Naive thymus-derived CD4-positive, alpha-beta T cell (primary cell): ENCODE measurements at regions of chr1 and their contacts with region 1.

Region 1: GRCh38 chr1:244451951-244452795 is 464 bp upstream of the ADSS2 start:
- DNase-seq: peak; percentile 93 to 99 (median 99)
- ATAC-seq: peak; percentile 94
- H3K4me3 ChIP-seq: peak overlapping the region; percentile 64
- H3K4me3 Mint-ChIP-seq: peak overlapping the region; percentile 76 to 99 (median 93)
- H3K27ac ChIP-seq: peak overlapping the region; percentile 96
- H3K27ac Mint-ChIP-seq: peak overlapping the region; percentile 85 to 99 (median 97)
- H3K4me1 ChIP-seq: peaks cover 27 to 36% of the 10 kb centered on the region in 2 donors
- H3K4me1 Mint-ChIP-seq: peaks cover 29 to 56% (median 41%) of the 10 kb centered on the region in 7 donors
- H3K27me3 ChIP-seq: no peaks in the 10 kb centered on the region
- H3K27me3 Mint-ChIP-seq: no peaks in the 10 kb centered on the region

Region 2: DNA sequence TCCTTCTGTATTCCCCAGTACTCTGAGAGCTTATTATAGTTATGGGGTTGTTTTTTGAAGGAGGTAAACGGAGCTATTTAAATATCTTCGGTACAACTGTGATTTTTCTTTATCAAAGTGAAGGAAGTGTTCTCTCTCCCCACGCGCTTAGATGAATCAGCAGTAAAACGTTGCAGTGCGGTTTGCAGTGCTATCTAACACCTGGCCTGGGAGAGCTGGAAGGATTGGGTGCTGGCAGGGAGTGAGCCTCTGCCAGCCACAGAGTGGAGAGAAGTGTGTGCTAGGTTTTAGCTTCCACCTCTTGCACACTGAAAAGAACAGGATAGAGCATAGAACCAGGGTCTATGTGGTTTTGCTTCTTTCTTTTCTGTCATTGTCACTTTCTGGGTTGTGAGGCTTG is 1030.4 kb before region 1 on chr1:
- CTCF ChIA-PET with region 1: no interaction called
- POLR2A ChIA-PET with region 1: no interaction called
- intact Hi-C with region 1: loop called in 1 of 2 experiments (anchors 5 kb)
- DNase-seq: peak in 8 of 9 donors; percentile 13 to 58 (median 39)
- ATAC-seq: peak; percentile 87
- H3K4me3 ChIP-seq: peak overlapping the region; percentile 6
- H3K4me3 Mint-ChIP-seq: peak overlapping the region; percentile 5 to 80 (median 62)
- H3K27ac ChIP-seq: no peak overlapping the region
- H3K27ac Mint-ChIP-seq: peak overlapping the region in 5 of 9 donors; percentile 1 to 81 (median 17)
- H3K4me1 ChIP-seq: peaks cover 9% of the 10 kb centered on the region in 2 donors
- H3K4me1 Mint-ChIP-seq: peaks cover 12 to 42% (median 22%) of the 10 kb centered on the region in 7 donors
- H3K27me3 ChIP-seq: no peaks in the 10 kb centered on the region
- H3K27me3 Mint-ChIP-seq: no peaks in the 10 kb centered on the region

Region 3: GRCh38 chr1:244296447-244296846 is 155.7 kb before region 1 on chr1:
- CTCF ChIA-PET with region 1: no interaction called
- POLR2A ChIA-PET with region 1: no interaction called
- intact Hi-C with region 1: loop called (anchors 2 to 5 kb)
- DNase-seq: no peak
- ATAC-seq: no peak
- H3K4me3 ChIP-seq: no peak overlapping the region
- H3K4me3 Mint-ChIP-seq: no peak overlapping the region
- H3K27ac ChIP-seq: no peak overlapping the region
- H3K27ac Mint-ChIP-seq: no peak overlapping the region
- H3K4me1 ChIP-seq: peaks cover 0 to 3% of the 10 kb centered on the region in 2 donors
- H3K4me1 Mint-ChIP-seq: peaks cover 6 to 16% (median 8%) of the 10 kb centered on the region in 7 donors
- H3K27me3 ChIP-seq: no peaks in the 10 kb centered on the region
- H3K27me3 Mint-ChIP-seq: peaks cover 0 to 8% (median 0%) of the 10 kb centered on the region in 5 donors

Region 4: DNA sequence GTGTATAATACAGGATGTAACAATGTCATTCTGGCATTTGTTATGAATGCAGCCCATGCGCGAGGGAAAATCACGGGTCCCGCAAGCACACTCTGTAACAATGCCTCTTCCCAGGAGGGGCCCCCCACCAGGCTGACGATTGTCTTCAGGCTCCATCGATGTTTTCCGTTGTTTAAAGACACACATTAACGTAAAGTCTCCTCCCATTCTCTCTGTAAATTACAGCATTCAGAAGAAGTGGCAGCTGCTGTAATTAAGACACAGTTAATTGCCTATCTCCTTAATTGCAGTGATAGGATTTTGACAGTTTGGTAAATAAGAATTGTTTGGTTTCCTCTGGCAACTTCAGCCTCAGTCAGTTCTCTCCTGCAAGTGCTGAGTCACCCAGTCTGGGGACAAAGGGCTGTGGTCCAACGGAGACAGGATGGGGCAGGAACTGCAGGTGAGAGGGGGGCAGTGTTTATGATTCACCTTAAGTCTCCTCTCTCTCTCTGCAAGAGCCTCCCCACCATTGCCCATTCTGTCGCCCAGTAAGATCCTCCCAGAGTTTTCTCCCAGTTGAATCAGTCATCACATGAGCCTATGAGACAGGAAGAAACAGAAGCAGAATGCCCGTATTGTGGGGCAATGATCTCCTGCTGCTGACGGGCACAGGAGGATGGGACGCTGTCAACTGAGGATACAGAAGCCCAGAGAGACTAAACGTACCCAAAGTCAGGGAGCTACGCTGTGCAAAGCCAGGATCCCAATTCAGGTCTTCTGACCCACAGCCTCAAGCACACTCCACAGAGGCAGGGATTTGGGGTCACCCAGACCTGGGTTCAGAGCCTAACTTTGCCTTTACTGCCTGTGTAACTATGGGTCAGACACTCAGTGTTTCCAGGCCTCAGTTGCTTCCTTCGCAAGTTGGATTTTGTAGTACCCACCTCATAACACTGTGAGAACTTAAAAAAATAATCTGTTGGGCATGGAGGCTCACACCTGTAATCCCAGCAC is 110.4 kb before region 1 on chr1:
- CTCF ChIA-PET with region 1: no interaction called
- POLR2A ChIA-PET with region 1: no interaction called
- intact Hi-C with region 1: loop called in 1 of 2 experiments (anchors 5 kb)
- DNase-seq: no peak
- ATAC-seq: peak; percentile 67
- H3K4me3 ChIP-seq: no peak overlapping the region
- H3K4me3 Mint-ChIP-seq: peak overlapping the region in 1 of 10 donors; percentile 73
- H3K27ac ChIP-seq: no peak overlapping the region
- H3K27ac Mint-ChIP-seq: peak overlapping the region in 1 of 9 donors; percentile 90
- H3K4me1 ChIP-seq: no peaks in the 10 kb centered on the region
- H3K4me1 Mint-ChIP-seq: peaks cover 0 to 44% (median 4%) of the 10 kb centered on the region in 7 donors
- H3K27me3 ChIP-seq: no peaks in the 10 kb centered on the region
- H3K27me3 Mint-ChIP-seq: peaks cover 0 to 6% (median 5%) of the 10 kb centered on the region in 5 donors

Region 5: GRCh38 chr1:244599937-244600350 is 147.8 kb after region 1 on chr1:
- CTCF ChIA-PET with region 1: interaction called, 3 read pairs
- POLR2A ChIA-PET with region 1: no interaction called
- intact Hi-C with region 1: loop called (anchors 5 kb)
- DNase-seq: peak in 5 of 9 donors; percentile 7 to 47 (median 14)
- ATAC-seq: peak; percentile 86
- H3K4me3 ChIP-seq: no peak overlapping the region
- H3K4me3 Mint-ChIP-seq: peak overlapping the region in 3 of 10 donors; percentile 30 to 67 (median 64)
- H3K27ac ChIP-seq: no peak overlapping the region
- H3K27ac Mint-ChIP-seq: peak overlapping the region in 5 of 9 donors; percentile 57 to 90 (median 89)
- H3K4me1 ChIP-seq: no peaks in the 10 kb centered on the region
- H3K4me1 Mint-ChIP-seq: peaks cover 0 to 16% (median 0%) of the 10 kb centered on the region in 7 donors
- H3K27me3 ChIP-seq: no peaks in the 10 kb centered on the region
- H3K27me3 Mint-ChIP-seq: peaks cover 0 to 7% (median 0%) of the 10 kb centered on the region in 5 donors

Region 6: GRCh38 chr1:244864253-244865027 is 412.3 kb after region 1 on chr1 and contains the start of gene HNRNPU:
- CTCF ChIA-PET with region 1: no interaction called
- POLR2A ChIA-PET with region 1: interaction called, 10 read pairs
- intact Hi-C with region 1: loop called (anchors 1 kb)
- DNase-seq: peak; percentile 93 to 99 (median 98)
- ATAC-seq: peak; percentile 81
- H3K4me3 ChIP-seq: peak within 1 kb of the TSS; percentile 78
- H3K4me3 Mint-ChIP-seq: peak within 1 kb of the TSS; percentile 86 to 98 (median 98)
- H3K27ac ChIP-seq: peak within 1 kb of the TSS; percentile 100
- H3K27ac Mint-ChIP-seq: peak within 1 kb of the TSS; percentile 93 to 100 (median 98)
- H3K4me1 ChIP-seq: peaks cover 23 to 25% of the 10 kb centered on the region in 2 donors
- H3K4me1 Mint-ChIP-seq: peaks cover 39 to 56% (median 51%) of the 10 kb centered on the region in 7 donors
- H3K27me3 ChIP-seq: no peaks in the 10 kb centered on the region
- H3K27me3 Mint-ChIP-seq: peaks cover 0 to 3% (median 0%) of the 10 kb centered on the region in 5 donors
- total RNA-seq, gene HNRNPU: 378 to 509 (median 428) TPM

Region 7: DNA sequence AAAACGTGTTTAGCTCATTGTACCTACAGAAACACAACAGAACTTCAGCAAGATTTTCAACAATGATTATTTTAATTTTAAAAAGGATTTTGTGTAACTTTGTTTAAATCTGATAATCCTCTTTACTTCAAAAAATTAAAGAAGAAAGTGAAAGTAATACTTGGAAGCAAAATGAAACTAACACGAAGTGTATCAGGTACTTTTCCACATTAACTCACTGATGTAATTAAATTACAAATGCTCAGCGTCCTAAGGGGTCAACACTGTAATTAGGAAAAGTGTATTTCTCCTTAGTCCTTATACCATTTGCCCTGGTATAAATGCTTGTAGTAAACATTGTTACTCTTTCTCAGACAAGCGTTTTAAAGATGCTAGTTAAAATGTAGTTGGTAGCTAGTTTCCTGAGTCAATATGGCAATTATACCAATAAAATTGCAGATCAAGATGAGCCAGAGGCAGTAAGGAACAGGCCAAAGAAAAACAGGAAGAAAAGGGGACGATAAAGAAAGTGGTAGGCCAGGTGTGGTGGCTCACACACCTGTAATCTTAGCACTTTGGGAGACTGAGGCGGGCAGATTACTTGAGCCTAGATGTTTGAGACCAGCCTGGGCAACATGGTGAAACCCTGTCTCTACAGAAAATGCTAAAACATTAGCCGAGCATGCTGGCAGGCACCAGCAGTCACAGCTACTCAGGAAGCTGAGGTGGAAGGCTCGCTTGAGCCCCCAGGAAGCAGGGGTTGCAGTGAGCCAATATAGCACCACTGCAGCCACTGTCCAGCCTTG is 1501.9 kb after region 1 on chr1:
- CTCF ChIA-PET with region 1: no interaction called
- POLR2A ChIA-PET with region 1: no interaction called
- intact Hi-C with region 1: loop called (anchors 5 to 10 kb)
- DNase-seq: peak in 6 of 9 donors; percentile 17 to 49 (median 34)
- ATAC-seq: peak; percentile 45
- H3K4me3 ChIP-seq: peak overlapping the region; percentile 31
- H3K4me3 Mint-ChIP-seq: peak overlapping the region in 8 of 10 donors; percentile 56 to 90 (median 78)
- H3K27ac ChIP-seq: peak overlapping the region; percentile 76
- H3K27ac Mint-ChIP-seq: peak overlapping the region in 1 of 9 donors; percentile 97
- H3K4me1 ChIP-seq: peaks cover 25 to 27% of the 10 kb centered on the region in 2 donors
- H3K4me1 Mint-ChIP-seq: peaks cover 9 to 29% (median 19%) of the 10 kb centered on the region in 7 donors
- H3K27me3 ChIP-seq: no peaks in the 10 kb centered on the region
- H3K27me3 Mint-ChIP-seq: no peaks in the 10 kb centered on the region